Thyroid gland (tissue), 4 donors: ENCODE measurements at regions of chr10 and their contacts with region 1.

Region 1: GRCh38 chr10:99430451-99431189 is at the start of gene GOT1:
- DNase-seq: peak; percentile 98
- H3K4me3 ChIP-seq: peak within 1 kb of the TSS; percentile 53 to 65 (median 56)
- H3K27ac ChIP-seq: peak within 1 kb of the TSS; percentile 95 to 97 (median 96)
- H3K4me1 ChIP-seq: peaks cover 8 to 10% of the 10 kb centered on the region in 2 donors
- H3K27me3 ChIP-seq: no peaks in the 10 kb centered on the region
- CTCF ChIP-seq: no peak
- POLR2A ChIP-seq: peak; percentile 34 to 92
- total RNA-seq, gene GOT1: 19.3 to 57.3 (median 36.7) TPM

Region 2: DNA sequence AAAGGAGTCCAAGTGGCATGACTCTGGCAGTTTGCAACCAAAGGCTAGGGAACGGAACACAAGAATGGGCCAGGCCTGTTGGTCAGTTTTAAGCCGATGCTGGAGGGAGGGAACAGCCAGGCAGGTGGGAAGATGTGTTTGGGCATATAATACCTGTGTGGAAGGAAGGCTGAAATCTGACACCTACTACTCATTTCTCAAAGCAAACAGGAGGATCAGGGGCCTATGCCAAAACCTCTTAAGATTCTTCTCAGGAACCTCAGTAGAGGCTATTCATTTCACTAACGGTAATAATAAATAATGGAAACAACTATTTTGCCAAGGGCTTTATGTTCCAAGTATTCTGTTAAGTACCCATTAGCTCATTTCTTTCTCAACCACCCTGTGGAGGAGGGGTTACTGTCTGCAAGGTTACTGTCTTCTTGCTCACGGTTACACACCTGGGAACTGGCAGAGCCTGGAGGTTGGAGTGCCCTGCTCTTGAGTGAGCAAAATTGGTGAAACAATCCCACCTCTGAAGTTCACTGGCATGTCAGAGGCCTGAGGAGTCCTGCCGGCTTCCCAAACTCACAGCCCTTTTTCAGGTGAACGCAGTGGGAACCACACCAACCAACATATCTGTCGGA is 35.7 kb before region 1 on chr10:
- intact Hi-C with region 1: loop called (anchors 5 kb)
- DNase-seq: peak; percentile 77 to 82
- H3K4me3 ChIP-seq: no peak overlapping the region
- H3K27ac ChIP-seq: peak overlapping the region in 2 of 3 donors; percentile 30 to 37
- H3K4me1 ChIP-seq: peaks cover 13 to 27% of the 10 kb centered on the region in 2 donors
- H3K27me3 ChIP-seq: no peaks in the 10 kb centered on the region
- CTCF ChIP-seq: no peak
- POLR2A ChIP-seq: peak in 1 of 2 donors; percentile 11

Region 3: DNA sequence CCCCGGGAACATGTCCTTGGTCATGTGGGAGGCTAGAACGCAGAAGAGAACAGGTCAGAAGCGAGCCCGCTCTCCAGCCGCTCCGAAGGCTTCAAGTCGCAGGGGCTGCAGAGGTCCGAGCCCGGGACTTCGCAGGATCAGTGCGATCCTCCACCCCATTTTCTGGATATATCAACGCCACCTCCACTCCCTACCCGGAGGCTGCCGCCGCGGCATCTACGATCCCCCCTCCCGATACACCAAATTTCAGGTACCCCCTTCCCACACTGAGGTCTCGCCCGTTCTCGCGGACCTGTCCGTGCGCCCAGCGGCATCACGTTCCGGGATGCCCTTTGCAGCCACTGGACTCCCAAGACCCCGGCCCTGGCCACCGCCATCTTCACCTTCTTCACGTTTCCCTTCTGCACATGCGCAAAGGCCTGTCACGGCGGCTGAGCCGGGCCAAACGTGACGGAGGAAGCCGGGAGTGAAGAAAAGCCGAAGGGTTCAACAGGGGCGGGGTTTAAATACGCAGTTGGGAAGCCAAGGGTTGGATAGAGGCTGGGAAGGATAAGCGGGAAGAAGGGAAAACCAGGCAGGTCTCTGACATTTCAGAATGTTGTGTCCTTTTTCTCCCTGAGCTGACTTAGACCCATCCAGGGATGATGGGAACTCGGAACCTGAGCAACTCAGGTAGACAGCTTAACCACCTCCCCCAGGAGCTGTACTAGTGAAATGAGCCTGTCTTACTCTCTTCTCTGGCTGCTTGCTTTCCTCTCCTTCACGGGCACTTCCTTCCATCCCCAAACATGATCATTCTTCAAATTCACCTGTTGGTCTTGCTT is 1099.1 kb after region 1 on chr10 and contains the start of gene NDUFB8:
- intact Hi-C with region 1: no loop called
- DNase-seq: peak; percentile 87 to 90
- H3K4me3 ChIP-seq: peak within 1 kb of the TSS; percentile 61 to 81 (median 75)
- H3K27ac ChIP-seq: peak within 1 kb of the TSS in 2 of 3 donors; percentile 37 to 82
- H3K4me1 ChIP-seq: peaks cover 18 to 23% of the 10 kb centered on the region in 2 donors
- H3K27me3 ChIP-seq: no peaks in the 10 kb centered on the region
- CTCF ChIP-seq: peak in 1 of 6 experiments; percentile 31
- POLR2A ChIP-seq: peak in 1 of 2 donors; percentile 64
- total RNA-seq, gene NDUFB8: 164 to 339 (median 209) TPM